Adrenal gland (tissue), 19 donors: ENCODE measurements at regions of chr9 and their contacts with region 1.

Region 1: GRCh38 chr9:96217754-96218693 is 84.0 kb downstream of the HSD17B3 start:
- DNase-seq: peak; percentile 58 to 80 (median 68)
- H3K4me3 ChIP-seq: peak overlapping the region in 1 of 4 donors; percentile 25
- H3K27ac ChIP-seq: peak overlapping the region in 3 of 5 donors; percentile 26 to 79 (median 64)
- H3K4me1 ChIP-seq: peaks cover 7 to 19% of the 10 kb centered on the region in 2 donors
- H3K27me3 ChIP-seq: peaks cover 5% of the 10 kb centered on the region
- CTCF ChIP-seq: peak; percentile 79 to 99 (median 87)
- POLR2A ChIP-seq: no peak

Region 2: DNA sequence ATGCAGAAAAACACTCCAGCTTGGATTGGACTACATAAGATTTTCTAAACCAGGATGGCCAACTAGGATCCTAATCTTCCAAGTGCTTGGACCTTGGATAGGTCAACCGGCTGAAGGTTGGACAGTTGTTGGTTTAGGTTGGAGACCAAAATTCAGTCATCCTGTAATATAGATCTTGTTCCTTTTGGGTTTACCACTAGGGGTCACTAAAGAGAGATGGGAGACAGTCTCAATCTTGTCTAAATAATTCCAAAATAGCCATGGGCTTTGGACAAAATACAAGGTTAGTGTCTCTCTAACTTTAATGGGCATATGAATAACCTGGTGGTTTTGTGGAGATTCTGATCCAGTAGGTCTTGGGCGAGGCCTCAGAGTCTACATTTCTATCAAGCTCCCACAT is 491.3 kb before region 1 on chr9:
- intact Hi-C with region 1: loop called (anchors 5 to 10 kb)
- DNase-seq: no peak
- H3K4me3 ChIP-seq: no peak overlapping the region
- H3K27ac ChIP-seq: no peak overlapping the region
- H3K4me1 ChIP-seq: peaks cover 0 to under 1% of the 10 kb centered on the region in 2 donors
- H3K27me3 ChIP-seq: no peaks in the 10 kb centered on the region
- CTCF ChIP-seq: peak; percentile 63 to 82 (median 75)
- POLR2A ChIP-seq: no peak